Activated CD4-positive, alpha-beta memory T cell treated with anti-CD3 and anti-CD28 coated beads, Interleukin-2, amount 10 ng/mL, durations not matched to agents 7 days and 5 days (primary cell): ENCODE measurements at regions of chr11 and their contacts with region 1.

Region 1: DNA sequence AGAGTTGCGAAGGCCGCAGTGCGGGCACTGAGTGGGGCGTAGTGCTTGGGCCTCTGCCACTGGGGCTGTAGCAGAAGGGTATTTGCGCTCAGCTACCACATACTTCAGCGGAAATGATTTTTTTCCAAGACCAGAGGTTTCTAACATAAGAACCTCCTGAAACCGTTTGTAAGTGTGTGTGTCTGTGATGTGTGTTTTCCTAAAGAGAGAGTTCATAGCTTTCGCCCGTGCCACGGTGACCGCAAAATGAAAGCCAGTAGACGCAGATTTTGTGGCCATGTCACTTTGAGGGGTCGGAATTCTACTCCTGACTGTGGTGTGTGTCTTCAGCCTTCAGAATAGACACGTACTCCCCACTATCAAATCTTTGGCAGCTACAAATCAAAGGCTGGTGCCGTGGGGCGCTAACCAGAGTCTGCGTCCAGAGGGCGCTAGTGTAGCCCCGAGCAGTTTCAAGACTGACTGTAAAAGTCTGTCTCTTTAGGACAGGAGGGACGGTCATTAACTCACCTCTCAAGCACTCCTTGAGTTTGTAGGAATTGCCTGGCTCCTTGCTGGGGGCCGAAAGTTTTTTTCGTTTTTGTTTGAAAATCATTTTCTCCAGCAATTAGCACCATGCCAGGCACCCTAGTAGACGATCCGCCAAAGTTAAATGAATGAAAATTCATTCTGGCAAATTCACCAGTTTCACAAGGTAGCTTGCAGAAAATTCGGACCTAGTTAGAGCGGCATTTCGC is 2.5 kb upstream of the CALCA start:
- DNase-seq: peak; percentile 68
- H3K4me3 Mint-ChIP-seq: peak overlapping the region; percentile 16
- H3K27ac Mint-ChIP-seq: no peak overlapping the region
- H3K4me1 Mint-ChIP-seq: peaks cover 30% of the 10 kb centered on the region
- H3K27me3 Mint-ChIP-seq: peaks cover 77% of the 10 kb centered on the region

Region 2: GRCh38 chr11:14916403-14916802 is 58.3 kb before region 1 on chr11:
- CTCF ChIA-PET with region 1: no interaction called
- POLR2A ChIA-PET with region 1: no interaction called
- DNase-seq: no peak
- H3K4me3 Mint-ChIP-seq: no peak overlapping the region
- H3K27ac Mint-ChIP-seq: no peak overlapping the region
- H3K4me1 Mint-ChIP-seq: no peaks in the 10 kb centered on the region
- H3K27me3 Mint-ChIP-seq: peaks cover 7% of the 10 kb centered on the region

Region 3: GRCh38 chr11:14949437-14950147 is 25.1 kb before region 1 on chr11:
- CTCF ChIA-PET with region 1: interaction called, 10 read pairs
- POLR2A ChIA-PET with region 1: no interaction called
- DNase-seq: no peak
- H3K4me3 Mint-ChIP-seq: no peak overlapping the region
- H3K27ac Mint-ChIP-seq: no peak overlapping the region
- H3K4me1 Mint-ChIP-seq: no peaks in the 10 kb centered on the region
- H3K27me3 Mint-ChIP-seq: no peaks in the 10 kb centered on the region

Region 4: DNA sequence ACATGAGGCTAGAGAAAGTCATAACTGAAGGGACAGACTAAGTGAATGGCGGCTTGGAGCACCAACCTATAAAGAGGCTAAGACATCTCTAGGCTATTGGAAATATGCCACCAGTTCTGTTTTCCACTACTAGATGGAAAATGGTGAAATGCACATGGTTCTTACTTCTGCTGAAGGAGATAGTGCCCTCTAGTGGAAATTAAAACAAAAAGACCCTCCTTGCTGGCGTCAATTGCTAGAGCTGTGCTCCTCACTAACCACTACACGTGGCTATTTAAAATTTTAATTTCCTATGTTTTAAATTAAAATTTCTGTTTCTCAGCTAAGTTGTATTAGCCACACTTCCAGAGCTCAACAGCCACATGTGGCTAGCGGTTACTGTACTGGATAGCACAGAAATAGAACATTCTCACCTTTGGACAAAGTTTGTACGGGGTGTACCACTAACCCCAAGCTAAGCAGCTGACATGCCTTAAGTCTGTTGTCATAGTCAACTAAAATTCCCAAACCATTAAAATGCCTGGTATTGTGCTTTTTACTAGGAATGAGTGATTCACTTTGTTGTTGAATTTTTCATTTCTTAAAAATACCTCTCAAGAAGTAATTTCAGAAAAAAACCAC is 31.6 kb after region 1 on chr11:
- CTCF ChIA-PET with region 1: interaction called, 39 read pairs
- POLR2A ChIA-PET with region 1: no interaction called
- DNase-seq: no peak
- H3K4me3 Mint-ChIP-seq: no peak overlapping the region
- H3K27ac Mint-ChIP-seq: no peak overlapping the region
- H3K4me1 Mint-ChIP-seq: no peaks in the 10 kb centered on the region
- H3K27me3 Mint-ChIP-seq: peaks cover 44% of the 10 kb centered on the region

Region 5: DNA sequence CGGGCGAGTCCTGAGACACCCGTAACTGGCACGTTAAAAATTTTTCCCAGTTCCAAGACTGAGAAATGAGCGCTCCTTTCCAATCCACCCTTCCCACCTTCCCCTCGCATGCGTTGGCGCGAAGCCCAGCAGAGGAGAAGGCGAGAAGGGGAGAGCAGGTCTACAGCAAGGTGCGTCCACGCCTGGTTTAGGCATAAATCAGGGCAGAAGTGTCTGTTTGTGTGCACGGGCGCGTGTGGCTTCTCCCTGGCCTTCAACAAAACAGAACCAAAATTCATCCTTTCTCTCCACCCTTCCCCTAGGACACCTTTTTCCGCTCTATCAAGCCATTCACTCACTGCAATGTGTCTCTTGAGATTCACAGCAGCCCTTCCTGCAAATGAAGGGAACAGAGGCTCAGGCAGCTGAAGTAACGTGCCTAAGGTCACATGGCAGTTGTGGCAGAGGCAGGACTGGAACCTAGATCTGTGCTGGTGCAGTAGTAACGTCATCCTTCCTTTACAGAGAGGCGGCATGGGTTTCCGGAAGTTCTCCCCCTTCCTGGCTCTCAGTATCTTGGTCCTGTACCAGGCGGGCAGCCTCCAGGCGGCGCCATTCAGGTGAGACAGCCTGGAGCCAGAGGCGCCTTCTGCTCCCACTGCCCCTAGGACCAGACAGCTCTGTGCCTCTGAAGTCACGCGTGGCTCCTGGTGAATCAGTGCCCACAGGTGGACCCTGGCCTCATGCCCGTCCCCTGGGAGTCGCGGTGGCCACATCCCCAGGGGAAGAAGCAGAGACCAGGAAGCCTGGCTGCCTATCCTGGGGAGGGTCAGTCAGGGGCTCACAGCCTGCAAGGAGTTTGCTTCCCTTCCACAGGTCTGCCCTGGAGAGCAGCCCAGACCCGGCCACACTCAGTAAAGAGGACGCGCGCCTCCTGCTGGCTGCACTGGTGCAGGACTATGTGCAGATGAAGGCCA is 99.8 kb after region 1 on chr11:
- CTCF ChIA-PET with region 1: interaction called, 31 read pairs
- POLR2A ChIA-PET with region 1: no interaction called
- DNase-seq: peak; percentile 87
- H3K4me3 Mint-ChIP-seq: peak overlapping the region; percentile 63
- H3K27ac Mint-ChIP-seq: peak overlapping the region; percentile 12
- H3K4me1 Mint-ChIP-seq: peaks cover 19% of the 10 kb centered on the region
- H3K27me3 Mint-ChIP-seq: peaks cover 23% of the 10 kb centered on the region